AG04450 (cell line): ENCODE measurements at regions of chr6 and their contacts with region 1.

Region 1: DNA sequence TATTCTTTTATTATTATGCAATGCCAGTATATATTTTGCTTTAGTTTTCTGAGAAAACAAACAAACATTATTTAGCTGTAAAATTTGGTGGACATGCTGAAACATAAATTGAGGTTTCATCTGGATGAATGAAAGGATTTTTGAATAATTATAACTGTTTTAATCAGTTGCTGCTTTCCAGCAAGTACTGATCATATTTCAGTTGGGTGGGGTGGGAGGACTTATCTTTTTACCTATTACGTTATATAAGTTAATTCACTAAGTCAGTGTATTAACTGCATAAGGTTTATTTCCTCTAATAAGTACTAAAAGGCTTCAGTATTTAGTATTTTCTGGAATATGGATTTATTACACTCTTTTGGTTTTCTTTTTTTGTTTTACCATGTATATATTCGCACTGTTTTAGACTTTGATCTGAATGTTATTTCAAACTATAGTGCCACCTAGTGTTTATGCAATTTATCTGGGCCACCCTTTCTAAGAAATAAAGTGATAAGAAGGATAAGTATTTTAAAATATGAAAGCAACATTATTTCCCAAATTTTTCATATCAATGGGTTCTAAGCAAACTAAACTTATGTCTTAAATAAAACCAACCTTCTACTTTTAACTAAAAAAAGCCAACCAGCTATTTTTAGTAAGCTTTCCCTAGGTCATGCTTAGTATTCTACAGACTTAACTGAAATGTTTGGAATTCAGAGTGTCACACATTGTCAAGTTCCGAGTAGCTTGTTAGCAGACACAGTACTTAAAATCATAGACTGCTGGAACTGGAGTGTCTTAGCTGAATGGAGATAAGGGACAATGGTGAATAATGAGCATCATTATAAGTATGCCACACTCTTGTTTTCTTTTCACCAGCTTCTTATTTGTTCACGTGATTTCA is 105.4 kb upstream of the MCHR2 start:
- DNase-seq: no peak
- H3K4me3 ChIP-seq: no peak overlapping the region
- H3K27ac ChIP-seq: no peak overlapping the region
- H3K27me3 ChIP-seq: no peaks in the 10 kb centered on the region
- CTCF ChIP-seq: peak; percentile 64

Region 2: GRCh38 chr6:99905209-99906106 is 194.0 kb before region 1 on chr6:
- CTCF ChIA-PET with region 1: interaction called, 29 read pairs
- POLR2A ChIA-PET with region 1: no interaction called
- DNase-seq: no peak
- H3K4me3 ChIP-seq: no peak overlapping the region
- H3K27ac ChIP-seq: no peak overlapping the region
- H3K27me3 ChIP-seq: peaks cover 4% of the 10 kb centered on the region
- CTCF ChIP-seq: peak; percentile 74

Region 3: GRCh38 chr6:99951016-99951805 is 148.2 kb before region 1 on chr6:
- CTCF ChIA-PET with region 1: no interaction called
- POLR2A ChIA-PET with region 1: no interaction called
- DNase-seq: no peak
- H3K4me3 ChIP-seq: no peak overlapping the region
- H3K27ac ChIP-seq: no peak overlapping the region
- H3K27me3 ChIP-seq: no peaks in the 10 kb centered on the region
- CTCF ChIP-seq: no peak

Region 4: DNA sequence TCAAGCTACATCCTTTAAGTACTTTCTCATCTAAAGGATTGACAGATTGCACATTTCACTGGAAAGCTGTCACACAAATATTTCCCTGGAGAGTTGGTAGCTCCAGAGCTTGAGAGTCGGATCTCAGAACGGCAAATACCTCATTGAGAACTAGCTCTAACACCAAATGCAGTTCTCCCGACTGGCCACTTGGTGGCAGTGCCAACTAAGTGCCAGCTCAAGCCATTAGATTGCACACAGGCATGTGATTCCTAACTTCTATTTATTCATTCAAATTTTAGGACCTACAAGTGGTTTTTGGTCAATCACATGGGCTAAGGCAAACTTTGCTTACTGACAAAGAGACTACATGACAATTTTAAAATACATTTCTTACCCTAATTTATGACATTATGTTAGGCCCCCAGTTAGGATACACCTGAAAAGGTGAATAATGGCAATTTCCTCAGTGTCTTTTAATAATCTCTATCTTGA is 97.5 kb before region 1 on chr6:
- CTCF ChIA-PET with region 1: interaction called, 97 read pairs
- POLR2A ChIA-PET with region 1: no interaction called
- DNase-seq: peak; percentile 21
- H3K4me3 ChIP-seq: no peak overlapping the region
- H3K27ac ChIP-seq: no peak overlapping the region
- H3K27me3 ChIP-seq: peaks cover 5% of the 10 kb centered on the region
- CTCF ChIP-seq: peak; percentile 95

Region 5: DNA sequence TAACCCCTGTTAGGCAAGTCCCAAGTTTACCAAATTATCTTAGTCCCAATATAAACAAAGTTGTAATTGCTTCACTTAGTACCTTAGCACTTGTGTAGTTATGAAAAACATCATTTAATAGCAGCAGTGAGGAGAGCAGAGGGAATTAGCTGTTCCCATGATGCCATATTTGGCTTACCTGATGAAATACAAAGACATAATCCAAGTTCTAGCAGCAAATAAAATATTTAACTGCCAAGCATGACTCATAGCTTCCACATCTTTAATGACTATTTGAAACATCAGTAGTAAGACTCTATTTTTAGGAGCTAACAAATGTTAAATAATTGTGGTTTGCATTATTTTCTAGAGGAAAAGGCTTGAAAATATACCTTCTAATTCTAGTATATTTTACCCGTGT is 11.4 kb before region 1 on chr6:
- CTCF ChIA-PET with region 1: interaction called, 25 read pairs
- POLR2A ChIA-PET with region 1: no interaction called
- DNase-seq: peak; percentile 4
- H3K4me3 ChIP-seq: no peak overlapping the region
- H3K27ac ChIP-seq: no peak overlapping the region
- H3K27me3 ChIP-seq: no peaks in the 10 kb centered on the region
- CTCF ChIP-seq: no peak

Region 6: DNA sequence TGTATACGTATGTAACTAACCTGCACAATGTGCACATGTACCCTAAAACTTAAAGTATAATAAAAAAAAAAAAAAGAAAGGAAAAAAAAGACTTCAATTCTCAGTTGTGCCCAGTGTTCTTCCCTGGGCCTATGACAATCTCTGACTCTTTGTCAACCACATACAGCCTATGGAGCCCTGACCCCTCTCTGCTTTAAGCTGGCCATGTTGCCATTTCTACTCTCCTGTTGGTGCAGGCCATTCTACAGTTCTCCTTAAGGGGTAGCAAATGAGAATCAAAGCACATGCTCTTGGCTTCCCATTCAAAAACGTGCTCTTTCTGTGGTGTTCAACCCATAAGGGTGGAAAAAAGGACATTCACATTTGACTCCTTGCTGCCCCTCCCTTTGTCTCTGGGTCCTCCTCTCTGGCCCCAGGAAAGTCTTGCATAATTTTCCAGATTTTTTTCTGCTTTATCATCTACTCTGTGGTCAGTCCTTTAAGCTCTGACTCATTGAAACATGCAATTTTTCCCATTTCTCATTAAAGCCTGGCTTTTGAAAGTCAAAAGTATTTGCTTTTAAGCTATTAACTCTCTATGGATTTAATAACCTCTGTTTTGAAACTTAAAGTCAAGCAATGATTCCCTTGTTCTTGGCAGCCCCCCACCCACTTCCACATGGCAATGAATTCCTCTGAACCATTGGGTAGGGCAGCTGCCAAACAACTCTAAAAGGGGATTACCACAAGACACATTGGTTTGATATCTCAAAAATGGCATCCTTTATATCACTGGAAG is 103.2 kb after region 1 on chr6:
- CTCF ChIA-PET with region 1: no interaction called
- POLR2A ChIA-PET with region 1: no interaction called
- DNase-seq: peak; percentile 77
- H3K4me3 ChIP-seq: no peak overlapping the region
- H3K27ac ChIP-seq: peak overlapping the region; percentile 92
- H3K27me3 ChIP-seq: no peaks in the 10 kb centered on the region
- CTCF ChIP-seq: no peak